ENCODE measurements at regions of chr3 and their contacts with region 1.

Region 1: GRCh38 chr3:186259612-186260383 is 102.2 kb downstream of the DGKG start:
- DNase-seq: peak; percentile 49 to 61 (median 59)
- H3K4me3 ChIP-seq: no peak overlapping the region
- H3K4me3 Mint-ChIP-seq: peak overlapping the region in 4 of 8 donors; percentile 30 to 56 (median 43)
- H3K27ac ChIP-seq: no peak overlapping the region
- H3K27ac Mint-ChIP-seq: peak overlapping the region in 6 of 7 donors; percentile 5 to 89 (median 80)
- H3K4me1 ChIP-seq: peaks cover 14% of the 10 kb centered on the region
- H3K4me1 Mint-ChIP-seq: peaks cover 8 to 16% (median 12%) of the 10 kb centered on the region in 4 donors
- H3K27me3 ChIP-seq: no peaks in the 10 kb centered on the region
- H3K27me3 Mint-ChIP-seq: peaks cover 2% of the 10 kb centered on the region in 2 donors

Region 2: GRCh38 chr3:185976977-185977678 is 282.7 kb before region 1 on chr3:
- CTCF ChIA-PET with region 1: no interaction called
- POLR2A ChIA-PET with region 1: no interaction called
- intact Hi-C with region 1: loop called (anchors 5 kb)
- DNase-seq: peak; percentile 61 to 70 (median 65)
- H3K4me3 ChIP-seq: no peak overlapping the region
- H3K4me3 Mint-ChIP-seq: no peak overlapping the region
- H3K27ac ChIP-seq: no peak overlapping the region
- H3K27ac Mint-ChIP-seq: no peak overlapping the region
- H3K4me1 ChIP-seq: no peaks in the 10 kb centered on the region
- H3K4me1 Mint-ChIP-seq: peaks cover 2 to 5% (median 5%) of the 10 kb centered on the region in 4 donors
- H3K27me3 ChIP-seq: no peaks in the 10 kb centered on the region
- H3K27me3 Mint-ChIP-seq: peaks cover 0 to 2% of the 10 kb centered on the region in 2 donors

Region 3: GRCh38 chr3:186281176-186281575 is 21.4 kb after region 1 on chr3:
- CTCF ChIA-PET with region 1: interaction called, 10 read pairs
- POLR2A ChIA-PET with region 1: no interaction called
- intact Hi-C with region 1: no loop called
- DNase-seq: no peak
- H3K4me3 ChIP-seq: no peak overlapping the region
- H3K4me3 Mint-ChIP-seq: no peak overlapping the region
- H3K27ac ChIP-seq: no peak overlapping the region
- H3K27ac Mint-ChIP-seq: peak overlapping the region in 1 of 7 donors; percentile 22
- H3K4me1 ChIP-seq: no peaks in the 10 kb centered on the region
- H3K4me1 Mint-ChIP-seq: no peaks in the 10 kb centered on the region
- H3K27me3 ChIP-seq: no peaks in the 10 kb centered on the region
- H3K27me3 Mint-ChIP-seq: peaks cover 4 to 7% of the 10 kb centered on the region in 2 donors

Region 4: DNA sequence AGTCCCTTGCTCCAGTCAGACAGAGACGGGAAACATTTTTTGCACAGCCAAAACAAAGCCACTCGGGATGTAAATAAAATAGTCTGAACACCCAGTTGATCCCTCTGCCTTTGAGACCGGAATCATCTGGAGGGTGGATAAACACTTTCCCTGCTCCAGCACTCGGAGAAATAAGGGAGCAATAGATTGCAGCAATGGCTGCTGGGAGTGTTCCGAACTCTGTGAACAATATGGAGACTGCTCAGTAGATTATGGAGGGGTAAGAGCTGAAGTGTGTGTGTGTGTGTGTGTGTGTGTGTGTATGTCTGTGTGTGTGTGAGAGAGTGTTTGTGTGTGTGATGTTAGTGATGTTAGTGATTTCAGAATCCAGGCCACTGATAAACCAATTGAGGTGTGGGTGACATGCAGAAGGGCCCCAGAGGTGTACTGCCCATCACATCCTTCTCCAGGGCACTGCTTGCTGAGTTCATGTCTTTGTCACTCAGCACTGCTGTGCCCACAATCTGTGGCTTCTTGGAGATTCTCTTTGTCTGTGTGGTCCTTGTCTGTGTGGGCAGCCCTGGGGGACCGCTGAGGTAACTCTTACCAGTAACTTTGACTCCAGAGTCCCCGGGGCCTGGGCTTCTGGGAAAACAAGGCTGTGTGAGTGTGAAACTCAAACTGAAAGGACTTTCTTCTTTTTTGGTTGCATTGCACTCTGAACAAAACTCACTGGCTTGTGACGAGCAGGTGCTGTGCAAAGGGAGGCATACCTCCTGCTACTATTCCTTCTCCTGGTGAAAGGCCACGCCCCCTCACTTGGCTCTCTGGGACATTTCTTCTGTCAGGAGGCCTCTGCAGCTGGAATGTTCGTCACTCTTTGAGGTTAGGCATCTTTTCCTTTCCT is 261.4 kb after region 1 on chr3:
- CTCF ChIA-PET with region 1: interaction called, 16 read pairs
- POLR2A ChIA-PET with region 1: no interaction called
- intact Hi-C with region 1: no loop called
- DNase-seq: no peak
- H3K4me3 ChIP-seq: no peak overlapping the region
- H3K4me3 Mint-ChIP-seq: peak overlapping the region in 2 of 8 donors; percentile 29 to 53
- H3K27ac ChIP-seq: no peak overlapping the region
- H3K27ac Mint-ChIP-seq: peak overlapping the region; percentile 16 to 96 (median 57)
- H3K4me1 ChIP-seq: peaks cover 57% of the 10 kb centered on the region
- H3K4me1 Mint-ChIP-seq: peaks cover 35 to 63% (median 49%) of the 10 kb centered on the region in 4 donors
- H3K27me3 ChIP-seq: no peaks in the 10 kb centered on the region
- H3K27me3 Mint-ChIP-seq: no peaks in the 10 kb centered on the region

Region 5: DNA sequence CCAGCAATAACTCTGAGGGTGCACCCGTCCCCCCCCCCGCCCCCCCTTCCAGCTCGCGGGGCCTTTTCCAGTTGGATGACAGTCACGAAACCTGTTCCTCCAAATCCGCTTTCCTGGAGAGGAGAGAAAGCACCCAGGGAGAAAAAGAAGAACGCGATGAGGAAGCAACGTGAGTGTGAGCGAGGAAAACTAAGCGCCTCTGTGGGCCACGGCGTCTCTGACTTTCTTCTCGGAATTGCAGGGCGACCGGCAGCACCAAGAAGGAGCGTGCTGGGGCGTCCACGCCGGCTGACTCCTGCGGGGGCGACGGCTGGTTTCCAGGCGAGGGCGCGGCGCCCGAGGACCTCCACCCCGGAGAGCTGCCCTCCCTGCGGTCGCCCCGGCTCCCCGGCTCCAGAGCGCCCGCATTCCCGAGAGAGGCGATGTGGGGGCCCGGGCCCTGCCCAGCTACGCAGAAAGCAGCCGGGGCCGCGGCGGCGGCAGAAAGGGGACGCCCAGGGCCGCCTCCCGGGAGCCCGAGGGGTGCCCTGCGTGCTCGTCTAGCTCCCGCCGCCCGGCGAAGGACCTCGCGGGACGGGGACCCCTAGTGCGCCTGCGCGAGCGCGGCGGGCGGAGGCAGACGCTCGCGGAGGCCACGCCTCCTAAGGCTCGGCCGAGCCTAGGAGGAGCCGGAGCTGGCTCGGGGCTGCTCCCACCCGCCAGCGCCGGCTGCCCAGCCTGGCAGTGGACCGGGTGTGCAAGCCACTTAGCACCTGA is 567.4 kb after region 1 on chr3:
- CTCF ChIA-PET with region 1: no interaction called
- POLR2A ChIA-PET with region 1: no interaction called
- intact Hi-C with region 1: loop called (anchors 5 kb)
- DNase-seq: peak; percentile 81 to 89 (median 87)
- H3K4me3 ChIP-seq: peak overlapping the region in 1 of 2 donors; percentile 65
- H3K4me3 Mint-ChIP-seq: peak overlapping the region; percentile 65 to 93 (median 78)
- H3K27ac ChIP-seq: peak overlapping the region; percentile 47
- H3K27ac Mint-ChIP-seq: peak overlapping the region in 2 of 7 donors; percentile 18 to 28
- H3K4me1 ChIP-seq: peaks cover 25% of the 10 kb centered on the region
- H3K4me1 Mint-ChIP-seq: peaks cover 5 to 16% (median 12%) of the 10 kb centered on the region in 4 donors
- H3K27me3 ChIP-seq: peaks cover 21% of the 10 kb centered on the region
- H3K27me3 Mint-ChIP-seq: peaks cover 30 to 38% of the 10 kb centered on the region in 2 donors